ENCODE measurements at regions of chr15 and their contacts with region 1.

Region 1: GRCh38 chr15:34679291-34679690 is 75.5 kb downstream of the GJD2 start:
- DNase-seq: no peak
- ATAC-seq: no peak
- H3K4me3 ChIP-seq: no peak overlapping the region
- H3K27ac ChIP-seq: no peak overlapping the region
- H3K4me1 ChIP-seq: no peaks in the 10 kb centered on the region
- H3K27me3 ChIP-seq: peaks cover 0 to 13% (median 7%) of the 10 kb centered on the region in 7 donors
- CTCF ChIP-seq: no peak

Region 2: GRCh38 chr15:33007303-33007855 is 1671.9 kb before region 1 on chr15:
- intact Hi-C with region 1: no loop called
- DNase-seq: no peak
- ATAC-seq: peak in 7 of 8 donors; percentile 26 to 83 (median 67)
- H3K4me3 ChIP-seq: peak overlapping the region in 1 of 10 donors; percentile 16
- H3K27ac ChIP-seq: no peak overlapping the region
- H3K4me1 ChIP-seq: peaks cover 0 to 31% (median 6%) of the 10 kb centered on the region in 9 donors
- H3K27me3 ChIP-seq: no peaks in the 10 kb centered on the region
- CTCF ChIP-seq: peak in 4 of 9 donors; percentile 12 to 42 (median 24)

Region 3: GRCh38 chr15:34616613-34617012 is 62.7 kb before region 1 on chr15:
- intact Hi-C with region 1: loop called in 1 of 10 experiments (anchors 10 kb)
- DNase-seq: peak in 1 of 2 donors; percentile 14
- ATAC-seq: peak in 7 of 8 donors; percentile 64 to 91 (median 82)
- H3K4me3 ChIP-seq: no peak overlapping the region
- H3K27ac ChIP-seq: no peak overlapping the region
- H3K4me1 ChIP-seq: peaks cover 0 to 16% (median 6%) of the 10 kb centered on the region in 9 donors
- H3K27me3 ChIP-seq: peaks cover 0 to 11% (median 0%) of the 10 kb centered on the region in 7 donors
- CTCF ChIP-seq: peak in 5 of 9 donors; percentile 8 to 45 (median 43)

Measured in heart right ventricle (tissue), 16 donors.